Prostate gland (tissue), 2 donors: ENCODE measurements at regions of chr12 and their contacts with region 1.

Region 1: DNA sequence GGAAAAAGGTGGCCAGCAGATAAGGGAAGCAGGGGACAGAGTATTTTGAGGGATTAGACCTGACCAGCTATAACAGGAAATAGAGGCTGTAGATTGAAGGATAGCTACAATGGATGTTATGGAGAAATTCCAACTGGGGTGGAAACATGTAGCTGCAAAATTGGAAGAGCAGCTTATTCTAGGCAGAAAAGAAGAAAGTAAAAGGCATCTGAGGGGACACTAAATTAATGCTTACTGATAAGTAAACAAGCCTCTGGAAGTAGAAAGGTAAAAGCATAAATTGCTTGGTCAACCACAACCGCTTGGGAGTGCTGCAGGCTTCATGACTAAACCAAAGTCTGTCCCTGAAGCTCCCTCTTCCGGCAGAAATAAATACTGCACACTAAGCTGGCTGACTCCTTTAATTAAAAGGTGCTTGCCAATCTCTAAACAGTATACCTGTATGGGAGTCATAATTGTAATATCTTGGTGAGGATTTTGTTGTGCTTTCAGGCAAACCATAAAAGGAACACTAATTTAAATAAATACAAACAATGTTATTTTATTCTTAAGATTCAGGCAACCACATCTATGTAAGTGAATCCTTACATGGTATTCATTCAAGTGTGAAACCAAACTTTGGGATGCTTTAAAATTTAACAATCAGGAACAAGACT is 7.7 kb downstream of the UBC start:
- DNase-seq: peak; percentile 96
- H3K4me3 ChIP-seq: no peak overlapping the region
- H3K27ac ChIP-seq: peak overlapping the region; percentile 36 to 46
- H3K4me1 ChIP-seq: peaks cover 11% of the 10 kb centered on the region
- H3K27me3 ChIP-seq: no peaks in the 10 kb centered on the region
- CTCF ChIP-seq: peak; percentile 94 to 99 (median 98)
- POLR2A ChIP-seq: no peak

Region 2: DNA sequence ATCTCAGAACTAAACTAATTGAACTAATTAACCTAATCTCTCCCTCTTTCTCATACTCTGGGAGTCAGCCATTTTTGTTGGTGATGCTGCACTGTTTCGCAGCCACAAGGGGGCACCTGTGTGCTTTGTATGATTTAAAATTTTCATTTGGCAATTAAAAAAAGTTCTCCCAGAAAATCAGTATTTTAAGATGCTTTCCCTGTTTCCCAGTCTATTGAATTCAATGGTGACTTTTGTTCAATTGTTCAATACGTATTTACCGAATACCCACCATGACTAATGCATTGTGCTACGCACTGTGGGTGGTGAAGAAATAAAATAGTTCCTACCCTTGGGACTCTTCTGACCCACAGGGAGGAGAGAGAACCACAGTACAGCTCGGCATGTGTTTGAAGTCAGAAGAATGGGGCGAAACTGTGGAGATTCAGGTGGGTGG is 870.0 kb before region 1 on chr12:
- intact Hi-C with region 1: loop called (anchors 5 kb)
- DNase-seq: peak; percentile 37
- H3K4me3 ChIP-seq: no peak overlapping the region
- H3K27ac ChIP-seq: no peak overlapping the region
- H3K4me1 ChIP-seq: no peaks in the 10 kb centered on the region
- H3K27me3 ChIP-seq: no peaks in the 10 kb centered on the region
- CTCF ChIP-seq: peak; percentile 80 to 92 (median 88)
- POLR2A ChIP-seq: no peak

Region 3: GRCh38 chr12:124567661-124568373 is 338.9 kb before region 1 on chr12:
- intact Hi-C with region 1: no loop called
- DNase-seq: peak; percentile 95
- H3K4me3 ChIP-seq: peak overlapping the region; percentile 23 to 76
- H3K27ac ChIP-seq: peak overlapping the region; percentile 87 to 88
- H3K4me1 ChIP-seq: peaks cover 16% of the 10 kb centered on the region
- H3K27me3 ChIP-seq: no peaks in the 10 kb centered on the region
- CTCF ChIP-seq: peak in 2 of 4 experiments; percentile 14 to 42
- POLR2A ChIP-seq: peak; percentile 28